ENCODE measurements at regions of chr3 and their contacts with region 1.

Region 1: DNA sequence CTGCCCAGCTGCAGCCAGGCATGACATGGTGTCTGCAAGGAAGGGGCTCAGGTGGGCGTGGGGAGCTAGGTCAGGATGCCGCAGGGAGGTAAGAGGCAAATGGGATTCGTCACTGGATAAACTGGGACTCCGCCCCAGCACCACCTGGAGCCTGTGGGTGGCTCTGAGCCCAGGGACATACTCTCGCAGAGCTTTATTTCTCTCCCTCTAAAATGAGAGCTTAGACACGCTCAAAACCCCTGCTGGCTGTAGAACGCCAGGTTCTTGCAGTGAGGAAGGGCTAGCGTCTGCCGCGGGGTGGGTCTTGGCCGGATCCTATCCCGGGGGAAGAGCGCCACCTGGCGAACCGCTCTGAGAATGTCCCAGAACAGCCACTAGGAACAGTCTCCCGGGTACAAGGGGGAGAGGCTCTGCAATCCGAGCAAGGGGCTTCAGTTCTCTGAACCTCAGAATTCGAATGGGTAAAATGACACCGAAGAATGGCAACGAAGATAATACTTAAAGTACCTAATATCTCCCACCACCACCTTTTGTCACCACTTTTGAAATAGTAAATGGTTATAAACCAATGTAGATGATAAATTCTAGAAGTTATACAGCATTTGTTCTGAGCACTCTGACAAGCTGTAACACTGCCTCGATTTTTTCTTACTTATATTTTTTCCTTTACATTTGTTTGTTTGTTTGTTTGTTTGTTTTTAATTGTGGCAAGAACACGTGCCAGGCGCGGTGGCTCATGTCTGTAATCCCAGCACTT is 53.2 kb upstream of the SRGAP3 start:
- DNase-seq: peak; percentile 85
- H3K4me3 ChIP-seq: peak overlapping the region; percentile 15 to 45 (median 44)
- H3K27ac ChIP-seq: peak overlapping the region; percentile 53
- H3K4me1 ChIP-seq: peaks cover 22% of the 10 kb centered on the region
- H3K27me3 ChIP-seq: no peaks in the 10 kb centered on the region
- CTCF ChIP-seq: peak; percentile 75 to 88

Region 2: GRCh38 chr3:8769088-8769822 is 533.3 kb before region 1 on chr3 and contains the start of gene OXTR:
- CTCF ChIA-PET with region 1: no interaction called
- dilution Hi-C with region 1: no loop called
- in situ Hi-C with region 1: loop called in 1 of 2 experiments (anchors 25 kb)
- intact Hi-C with region 1: loop called (anchors 2 kb)
- DNase-seq: peak; percentile 70
- H3K4me3 ChIP-seq: peak within 1 kb of the TSS; percentile 2 to 53 (median 45)
- H3K27ac ChIP-seq: no peak within 1 kb of the TSS
- H3K4me1 ChIP-seq: peaks cover 22% of the 10 kb centered on the region
- H3K27me3 ChIP-seq: no peaks in the 10 kb centered on the region
- CTCF ChIP-seq: peak; percentile 80 to 100
- total RNA-seq, gene OXTR: 1.3 to 8.0 TPM

Region 3: DNA sequence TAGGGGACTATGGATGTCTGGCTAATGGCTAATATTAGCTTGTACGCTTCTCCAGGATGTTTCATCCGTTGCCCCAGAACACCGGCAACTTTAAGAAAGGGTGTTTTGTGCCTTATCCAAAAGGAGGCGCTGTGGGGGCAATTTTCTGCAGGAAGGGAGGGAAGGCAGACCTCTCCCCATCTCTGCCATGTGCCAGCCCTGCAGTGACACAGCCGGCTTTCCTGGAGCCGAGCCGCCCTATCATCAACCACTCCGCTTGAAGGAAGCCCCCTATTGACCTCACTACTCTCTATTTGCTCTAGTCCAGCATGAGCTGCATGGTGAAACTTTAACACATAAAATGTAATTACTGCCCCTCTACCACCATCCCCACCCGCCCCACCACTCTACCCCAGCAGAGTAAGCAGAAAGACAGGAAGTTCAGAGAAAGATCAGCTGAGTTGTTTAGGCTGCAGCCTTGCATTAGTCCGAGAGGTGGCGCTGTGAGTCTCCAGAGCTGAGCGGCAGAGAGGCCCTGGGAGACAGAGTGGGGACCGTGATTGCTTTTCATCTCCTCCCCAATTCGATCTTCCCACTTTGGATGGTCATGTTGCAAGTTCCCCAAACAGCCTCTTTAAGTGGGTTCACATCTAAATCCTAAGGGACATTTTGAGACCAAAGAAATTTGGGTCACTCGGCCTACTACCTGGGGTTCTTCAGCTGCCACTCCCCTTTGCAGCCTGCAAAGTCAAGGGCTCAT is 314.8 kb before region 1 on chr3:
- CTCF ChIA-PET with region 1: interaction called, 6 read pairs
- dilution Hi-C with region 1: no loop called
- in situ Hi-C with region 1: no loop called
- intact Hi-C with region 1: loop called (anchors 1 kb)
- DNase-seq: peak; percentile 50
- H3K4me3 ChIP-seq: no peak overlapping the region
- H3K27ac ChIP-seq: no peak overlapping the region
- H3K4me1 ChIP-seq: no peaks in the 10 kb centered on the region
- H3K27me3 ChIP-seq: no peaks in the 10 kb centered on the region
- CTCF ChIP-seq: peak; percentile 73 to 74

Region 4: GRCh38 chr3:9067352-9067975 is 235.1 kb before region 1 on chr3:
- CTCF ChIA-PET with region 1: no interaction called
- dilution Hi-C with region 1: no loop called
- in situ Hi-C with region 1: no loop called
- intact Hi-C with region 1: loop called (anchors 1 kb)
- DNase-seq: peak; percentile 23
- H3K4me3 ChIP-seq: no peak overlapping the region
- H3K27ac ChIP-seq: no peak overlapping the region
- H3K4me1 ChIP-seq: no peaks in the 10 kb centered on the region
- H3K27me3 ChIP-seq: no peaks in the 10 kb centered on the region
- CTCF ChIP-seq: peak; percentile 73 to 87

Region 5: GRCh38 chr3:9175455-9175854 is 127.1 kb before region 1 on chr3:
- CTCF ChIA-PET with region 1: no interaction called
- dilution Hi-C with region 1: no loop called
- in situ Hi-C with region 1: no loop called
- intact Hi-C with region 1: loop called (anchors 1 kb)
- DNase-seq: peak; percentile 85
- H3K4me3 ChIP-seq: no peak overlapping the region
- H3K27ac ChIP-seq: peak overlapping the region; percentile 92
- H3K4me1 ChIP-seq: peaks cover 54% of the 10 kb centered on the region
- H3K27me3 ChIP-seq: no peaks in the 10 kb centered on the region
- CTCF ChIP-seq: no peak

Region 6: GRCh38 chr3:9260305-9260704 is 42.3 kb before region 1 on chr3:
- CTCF ChIA-PET with region 1: no interaction called
- dilution Hi-C with region 1: no loop called
- in situ Hi-C with region 1: no loop called
- intact Hi-C with region 1: no loop called
- DNase-seq: no peak
- H3K4me3 ChIP-seq: no peak overlapping the region
- H3K27ac ChIP-seq: no peak overlapping the region
- H3K4me1 ChIP-seq: no peaks in the 10 kb centered on the region
- H3K27me3 ChIP-seq: no peaks in the 10 kb centered on the region
- CTCF ChIP-seq: no peak

Measured in mammary epithelial cell (primary cell).